Sciatic nerve (tissue), 2 donors: ENCODE measurements at regions of chr12 and their contacts with region 1.

Region 1: GRCh38 chr12:28750946-28751685 is 398.0 kb upstream of the FAR2 start:
- DNase-seq: no peak
- ATAC-seq: peak; percentile 36

Region 2: DNA sequence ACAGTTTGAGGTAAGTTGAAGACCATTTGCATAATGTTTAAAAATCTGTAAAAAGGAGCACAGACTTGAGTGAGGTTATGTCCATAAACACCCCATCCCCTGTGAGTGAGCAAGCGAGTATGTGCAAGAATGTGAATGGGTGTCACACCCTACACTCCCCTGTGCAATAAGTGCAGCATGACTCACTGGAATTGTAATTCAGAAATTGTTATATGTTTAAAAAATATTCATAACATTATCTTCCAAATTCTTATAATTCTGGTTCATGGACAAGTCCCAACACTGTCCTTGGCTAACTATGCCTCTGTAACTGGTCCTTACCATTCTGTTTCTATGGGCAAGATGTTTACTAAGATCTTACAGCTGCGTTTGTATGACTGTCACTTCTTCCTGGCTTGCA is 190.1 kb after region 1 on chr12:
- intact Hi-C with region 1: no loop called
- DNase-seq: no peak
- ATAC-seq: no peak

Region 3: DNA sequence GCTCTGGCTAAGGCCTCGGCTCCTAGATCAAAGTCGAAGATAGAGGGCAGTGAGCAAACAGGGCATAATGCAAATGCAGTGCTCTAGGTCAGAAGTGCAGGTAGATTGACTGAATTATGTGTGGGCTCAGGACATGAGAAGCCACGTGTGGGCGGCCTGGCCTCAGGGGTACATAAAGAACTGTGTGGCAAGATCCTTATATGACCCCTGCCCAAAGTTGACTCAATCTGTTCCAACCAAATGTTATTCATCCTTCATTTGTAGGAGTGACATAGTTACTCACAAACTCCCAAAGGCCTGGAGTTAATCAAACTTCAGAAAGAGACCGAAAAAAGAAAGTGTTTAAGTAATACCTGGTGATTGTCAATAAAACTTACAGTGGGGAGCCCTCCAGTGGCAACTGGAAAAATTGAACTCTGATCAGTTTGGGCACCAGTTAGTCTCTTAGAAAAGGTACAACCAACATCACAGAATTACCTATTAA is 247.6 kb after region 1 on chr12:
- intact Hi-C with region 1: loop called (anchors 2 kb)
- DNase-seq: no peak
- ATAC-seq: peak; percentile 61